A673 (cell line): ENCODE measurements at regions of chr14 and their contacts with region 1.

Region 1: DNA sequence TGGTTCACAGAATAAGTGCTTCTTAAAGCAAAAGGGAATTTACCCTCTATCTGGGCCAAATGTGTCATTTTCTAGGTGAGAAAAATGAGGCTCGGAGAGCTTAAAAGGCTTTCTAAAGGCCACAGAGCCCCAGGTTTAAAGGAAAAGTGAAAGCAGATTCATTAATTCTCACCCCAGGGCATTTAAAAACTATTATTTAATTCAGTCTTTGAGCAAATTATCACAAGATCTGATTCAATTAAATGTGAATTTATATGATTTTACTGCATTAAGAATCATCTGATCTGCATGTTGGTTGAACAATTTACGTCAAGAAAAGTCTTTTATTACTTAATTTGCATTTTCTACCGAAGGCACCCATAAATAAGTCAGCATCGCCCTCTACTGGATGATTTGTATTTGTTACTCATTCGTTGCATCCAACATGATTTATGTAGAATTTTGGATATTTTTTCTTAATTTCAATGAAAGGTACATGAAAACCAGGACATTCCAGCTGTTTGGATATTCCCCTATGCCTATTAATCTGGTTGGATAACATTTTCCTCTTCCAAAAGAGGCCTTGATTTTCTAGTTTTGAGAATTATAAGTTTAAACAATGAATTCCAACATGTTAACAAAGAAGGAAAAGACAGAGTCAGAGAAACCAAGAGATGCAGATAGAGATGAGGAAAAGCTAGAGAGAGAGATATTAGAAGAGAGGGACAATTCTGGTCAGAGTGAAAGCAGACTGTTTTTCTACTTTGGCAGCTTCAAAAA is 19.1 kb upstream of the DHRS7 start:
- DNase-seq: peak; percentile 81
- H3K4me3 ChIP-seq: peak overlapping the region; percentile 34
- H3K27ac ChIP-seq: no peak overlapping the region
- H3K4me1 ChIP-seq: peaks cover 11% of the 10 kb centered on the region
- H3K27me3 ChIP-seq: no peaks in the 10 kb centered on the region
- CTCF ChIP-seq: peak; percentile 84

Region 2: DNA sequence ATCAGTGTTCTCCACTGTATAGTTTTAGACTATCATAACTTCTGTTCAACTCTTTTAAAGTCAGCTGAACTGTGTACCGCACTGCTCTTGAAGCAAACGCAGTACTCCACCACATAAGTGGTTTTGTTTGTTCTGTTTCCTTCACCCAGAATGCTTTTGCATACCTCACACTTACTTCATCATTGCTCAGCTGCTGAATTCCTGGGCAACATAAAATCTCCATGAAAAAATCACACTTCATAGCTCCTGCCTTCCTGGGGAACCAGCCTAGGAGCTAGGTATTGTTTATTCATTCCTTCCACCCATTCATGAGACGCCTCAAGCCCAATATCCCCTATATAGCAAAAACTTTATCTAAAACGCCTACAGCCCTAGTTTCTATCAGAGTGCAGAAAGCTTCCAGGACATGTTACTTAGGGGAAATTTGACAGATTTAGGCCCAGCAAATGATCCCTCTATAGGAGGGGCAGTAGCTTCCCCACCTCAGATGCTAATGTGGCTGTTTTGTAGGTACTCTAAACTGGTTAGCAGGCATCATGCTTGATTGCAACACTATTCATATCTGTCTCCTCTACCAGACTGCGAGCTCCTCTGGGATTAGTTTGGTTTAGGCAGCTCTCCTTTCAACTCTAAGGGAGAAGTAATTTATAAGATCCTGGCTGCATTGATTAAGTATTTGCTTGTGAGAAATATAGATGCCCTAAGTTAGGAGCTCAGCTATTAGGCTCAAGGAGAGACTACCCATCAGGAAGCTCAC is 219.9 kb before region 1 on chr14:
- CTCF ChIA-PET with region 1: interaction called, 7 read pairs
- POLR2A ChIA-PET with region 1: no interaction called
- intact Hi-C with region 1: loop called (anchors 2 kb)
- DNase-seq: no peak
- H3K4me3 ChIP-seq: no peak overlapping the region
- H3K27ac ChIP-seq: no peak overlapping the region
- H3K4me1 ChIP-seq: peaks cover 3% of the 10 kb centered on the region
- H3K27me3 ChIP-seq: no peaks in the 10 kb centered on the region
- CTCF ChIP-seq: no peak

Region 3: DNA sequence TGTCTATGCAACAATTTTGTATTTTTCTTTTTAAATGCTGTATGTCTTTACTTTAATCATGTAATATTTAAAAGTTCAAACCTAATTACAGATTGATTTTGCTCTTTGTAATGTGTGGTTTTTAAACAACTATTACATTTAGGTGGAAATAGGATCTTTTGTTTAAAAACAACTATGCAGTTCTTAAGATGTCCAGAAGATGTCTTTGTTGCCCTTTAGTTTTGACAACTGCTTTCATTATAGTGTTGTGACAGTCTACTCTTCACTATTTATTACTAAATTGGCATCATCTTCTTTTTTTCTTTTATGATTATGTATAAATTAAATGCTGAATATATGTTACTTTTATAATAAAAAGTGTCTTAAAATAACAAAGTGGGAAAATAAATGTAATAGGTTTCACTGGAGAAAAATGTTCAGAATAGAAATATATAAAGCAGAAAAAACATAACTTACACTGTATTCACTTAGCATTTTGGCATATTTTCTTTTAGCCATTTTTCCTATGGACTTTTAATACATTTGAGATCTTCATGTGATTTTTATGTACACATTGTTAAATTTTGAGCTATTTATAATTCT is 119.7 kb before region 1 on chr14:
- CTCF ChIA-PET with region 1: interaction called, 5 read pairs
- POLR2A ChIA-PET with region 1: no interaction called
- intact Hi-C with region 1: loop called (anchors 5 kb)
- DNase-seq: peak; percentile 45
- H3K4me3 ChIP-seq: no peak overlapping the region
- H3K27ac ChIP-seq: no peak overlapping the region
- H3K4me1 ChIP-seq: no peaks in the 10 kb centered on the region
- H3K27me3 ChIP-seq: no peaks in the 10 kb centered on the region
- CTCF ChIP-seq: peak; percentile 67

Region 4: GRCh38 chr14:60331201-60332045 is 147.1 kb after region 1 on chr14:
- CTCF ChIA-PET with region 1: no interaction called
- POLR2A ChIA-PET with region 1: no interaction called
- intact Hi-C with region 1: loop called (anchors 10 kb)
- DNase-seq: peak; percentile 82
- H3K4me3 ChIP-seq: no peak overlapping the region
- H3K27ac ChIP-seq: no peak overlapping the region
- H3K4me1 ChIP-seq: peaks cover 5% of the 10 kb centered on the region
- H3K27me3 ChIP-seq: no peaks in the 10 kb centered on the region
- CTCF ChIP-seq: peak; percentile 92